Left ventricle myocardium inferior (tissue), 1 donor: ENCODE measurements at regions of chr11 and their contacts with region 1.

Region 1: DNA sequence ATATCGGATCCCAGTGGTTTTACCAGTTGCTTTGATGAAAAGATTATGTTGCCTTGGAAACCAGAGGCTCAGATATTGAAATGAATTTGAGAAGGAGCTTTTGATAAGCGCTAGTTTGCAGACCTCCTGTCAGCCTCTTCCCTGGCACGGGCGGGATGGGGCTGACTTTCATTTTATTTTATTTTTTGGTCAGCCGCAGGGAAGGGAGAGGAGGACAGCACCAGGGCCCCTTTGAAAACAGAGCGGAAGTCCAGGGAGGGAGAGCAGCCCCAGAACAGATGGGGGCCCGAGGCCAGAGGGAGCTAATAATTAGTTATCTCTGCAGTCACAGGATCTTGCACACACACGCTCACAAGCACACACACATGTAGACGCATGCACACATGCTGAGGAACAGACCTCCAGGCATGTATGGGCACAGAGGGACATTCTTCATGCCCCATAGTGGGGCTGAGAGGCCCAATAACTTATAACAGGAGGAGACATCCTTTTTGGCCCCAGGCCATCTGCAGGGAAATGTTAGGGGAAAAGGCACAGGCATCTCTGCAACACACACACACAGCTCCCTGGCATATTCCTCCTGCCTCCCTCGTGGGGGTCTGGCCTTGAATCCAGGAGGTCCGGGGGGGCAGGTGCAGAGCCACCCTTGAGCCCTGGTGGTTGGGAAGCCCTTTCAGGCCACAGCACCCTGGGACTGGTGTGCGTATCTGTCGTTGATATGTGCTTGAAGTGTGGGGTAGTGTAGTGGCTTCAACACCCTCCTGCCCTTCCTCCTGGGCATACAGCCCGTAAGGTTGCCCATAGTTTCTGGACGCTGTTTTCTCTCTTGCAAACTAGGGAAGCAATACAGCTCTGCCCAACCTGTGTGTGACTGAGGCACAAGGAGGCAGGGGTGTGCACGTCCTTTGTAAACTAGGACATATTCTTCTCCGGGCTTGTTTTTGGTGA is 117.3 kb downstream of the CEP164 start:
- DNase-seq: no peak
- H3K4me3 ChIP-seq: no peak overlapping the region
- H3K27ac ChIP-seq: no peak overlapping the region
- H3K4me1 ChIP-seq: no peaks in the 10 kb centered on the region
- H3K27me3 ChIP-seq: peaks cover 23% of the 10 kb centered on the region
- CTCF ChIP-seq: no peak

Region 2: DNA sequence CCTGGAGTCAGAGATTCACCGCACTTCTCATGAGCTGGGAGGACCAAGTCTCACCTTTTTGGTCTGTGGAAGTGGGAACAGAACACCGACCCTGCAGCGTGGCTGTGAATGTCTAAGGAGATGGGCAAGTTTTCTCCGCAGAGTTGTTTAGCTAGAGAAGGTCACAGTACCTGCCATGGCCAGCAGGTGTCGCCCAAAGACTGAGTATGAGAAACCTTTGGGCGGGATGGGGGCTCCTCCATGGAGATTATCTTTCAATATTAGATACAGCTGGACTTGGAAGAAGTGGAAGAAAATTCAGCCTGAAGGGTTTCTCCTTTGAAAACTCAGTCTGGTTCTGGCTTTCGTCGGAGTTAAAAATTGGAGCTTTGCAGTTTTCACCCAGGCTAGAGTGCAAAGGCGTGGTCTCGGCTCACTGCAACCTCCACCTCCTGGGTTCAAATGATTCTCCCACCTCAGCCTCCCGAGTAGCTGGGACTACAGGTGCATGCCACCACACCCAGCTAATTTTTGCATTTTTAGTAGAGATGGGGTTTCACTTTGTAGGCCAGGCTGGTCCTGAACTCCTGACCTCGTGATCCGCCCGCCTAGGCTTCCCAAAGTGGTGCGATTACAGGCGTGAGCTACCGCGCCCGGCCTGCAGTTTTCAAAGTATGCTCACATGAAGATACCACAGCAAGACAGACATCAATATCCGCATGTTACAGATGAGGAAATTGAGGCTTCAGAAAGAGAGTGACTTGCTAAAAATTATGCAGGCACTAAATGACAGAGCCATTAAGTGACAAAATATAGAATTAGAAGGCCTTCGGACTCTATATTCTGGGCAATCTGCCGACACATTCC is 362.7 kb after region 1 on chr11:
- intact Hi-C with region 1: loop called (anchors 5 kb)
- DNase-seq: peak; percentile 82
- H3K4me3 ChIP-seq: no peak overlapping the region
- H3K27ac ChIP-seq: no peak overlapping the region
- H3K4me1 ChIP-seq: peaks cover 21% of the 10 kb centered on the region
- H3K27me3 ChIP-seq: peaks cover 15% of the 10 kb centered on the region
- CTCF ChIP-seq: peak; percentile 94